ENCODE measurements at regions of chr7 and their contacts with region 1.

Region 1: GRCh38 chr7:44082541-44083207 is 344 bp upstream of the POLM start:
- DNase-seq: peak; percentile 99
- H3K4me3 Mint-ChIP-seq: peak overlapping the region; percentile 74
- H3K27ac Mint-ChIP-seq: peak overlapping the region; percentile 56
- H3K4me1 Mint-ChIP-seq: peaks cover 33% of the 10 kb centered on the region
- H3K27me3 Mint-ChIP-seq: no peaks in the 10 kb centered on the region

Region 2: GRCh38 chr7:43669286-43670081 is 413.2 kb before region 1 on chr7:
- CTCF ChIA-PET with region 1: no interaction called
- POLR2A ChIA-PET with region 1: no interaction called
- intact Hi-C with region 1: loop called (anchors 1 kb)
- DNase-seq: peak; percentile 96
- H3K4me3 Mint-ChIP-seq: peak overlapping the region; percentile 78
- H3K27ac Mint-ChIP-seq: peak overlapping the region; percentile 96
- H3K4me1 Mint-ChIP-seq: peaks cover 78% of the 10 kb centered on the region
- H3K27me3 Mint-ChIP-seq: no peaks in the 10 kb centered on the region

Region 3: GRCh38 chr7:44044315-44045225 is 38.1 kb before region 1 on chr7 and contains the start of gene DBNL:
- CTCF ChIA-PET with region 1: interaction called, 3 read pairs
- POLR2A ChIA-PET with region 1: interaction called, 16 read pairs
- intact Hi-C with region 1: loop called (anchors 1 kb)
- DNase-seq: peak; percentile 95
- H3K4me3 Mint-ChIP-seq: peak within 1 kb of the TSS; percentile 90
- H3K27ac Mint-ChIP-seq: peak within 1 kb of the TSS; percentile 88
- H3K4me1 Mint-ChIP-seq: peaks cover 45% of the 10 kb centered on the region
- H3K27me3 Mint-ChIP-seq: no peaks in the 10 kb centered on the region
- total RNA-seq, gene DBNL: 128 to 129 TPM

Region 4: GRCh38 chr7:44097064-44097932 is 14.6 kb after region 1 on chr7:
- CTCF ChIA-PET with region 1: no interaction called
- POLR2A ChIA-PET with region 1: interaction called, 3 read pairs
- intact Hi-C with region 1: loop called (anchors 1 kb)
- DNase-seq: peak; percentile 54
- H3K4me3 Mint-ChIP-seq: no peak overlapping the region
- H3K27ac Mint-ChIP-seq: no peak overlapping the region
- H3K4me1 Mint-ChIP-seq: peaks cover 12% of the 10 kb centered on the region
- H3K27me3 Mint-ChIP-seq: peaks cover 2% of the 10 kb centered on the region

Region 5: GRCh38 chr7:44200647-44201461 is 118.2 kb after region 1 on chr7 and contains the start of gene YKT6:
- CTCF ChIA-PET with region 1: no interaction called
- POLR2A ChIA-PET with region 1: no interaction called
- intact Hi-C with region 1: loop called (anchors 1 kb)
- DNase-seq: peak; percentile 97
- H3K4me3 Mint-ChIP-seq: peak within 1 kb of the TSS; percentile 83
- H3K27ac Mint-ChIP-seq: peak within 1 kb of the TSS; percentile 23
- H3K4me1 Mint-ChIP-seq: peaks cover 28% of the 10 kb centered on the region
- H3K27me3 Mint-ChIP-seq: peaks cover 9% of the 10 kb centered on the region
- total RNA-seq, gene YKT6: 57.0 to 60.4 TPM

Measured in activated CD4-positive, alpha-beta memory T cell treated with anti-CD3 and anti-CD28 coated beads for 36 hours (primary cell).